Naive thymus-derived CD4-positive, alpha-beta T cell (primary cell): ENCODE measurements at regions of chr6 and their contacts with region 1.

Region 1: GRCh38 chr6:24974182-24975171 is 38.7 kb upstream of the RIPOR2 start:
- DNase-seq: peak in 1 of 9 donors; percentile 40
- ATAC-seq: peak; percentile 73
- H3K4me3 ChIP-seq: peak overlapping the region; percentile 6
- H3K4me3 Mint-ChIP-seq: peak overlapping the region in 3 of 10 donors; percentile 2 to 58 (median 20)
- H3K27ac ChIP-seq: no peak overlapping the region
- H3K27ac Mint-ChIP-seq: peak overlapping the region in 7 of 9 donors; percentile 1 to 90 (median 27)
- H3K4me1 ChIP-seq: peaks cover 19 to 31% of the 10 kb centered on the region in 2 donors
- H3K4me1 Mint-ChIP-seq: peaks cover 41 to 80% (median 72%) of the 10 kb centered on the region in 7 donors
- H3K27me3 ChIP-seq: no peaks in the 10 kb centered on the region
- H3K27me3 Mint-ChIP-seq: no peaks in the 10 kb centered on the region

Region 2: DNA sequence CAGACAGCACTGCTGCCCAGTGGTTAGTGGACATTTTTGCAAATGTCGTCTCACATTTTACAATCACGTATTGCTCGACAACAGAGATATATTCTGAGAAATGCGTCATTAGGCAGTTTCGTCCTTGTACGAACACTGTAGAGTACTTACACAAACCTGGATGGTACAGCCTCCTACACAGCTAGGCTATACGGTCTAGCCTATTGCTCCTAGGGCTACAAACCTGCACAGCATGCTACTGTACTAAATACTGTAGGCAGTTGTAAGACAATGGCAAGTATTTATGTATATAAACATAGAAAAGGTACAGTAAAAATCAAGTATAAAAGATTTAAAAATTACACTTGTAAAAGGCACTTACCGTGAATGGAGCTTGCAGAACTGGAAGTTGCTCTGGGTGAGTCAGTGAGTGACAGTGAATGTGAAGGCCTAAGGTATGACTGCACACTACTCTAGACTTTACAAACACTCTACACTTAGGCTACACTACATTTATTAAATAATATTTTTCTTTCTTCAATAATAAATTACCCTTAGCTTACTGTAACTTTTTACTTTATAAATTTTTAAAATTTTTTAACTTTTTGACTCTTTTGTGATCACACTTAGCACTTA is 436.6 kb before region 1 on chr6:
- CTCF ChIA-PET with region 1: no interaction called
- POLR2A ChIA-PET with region 1: no interaction called
- intact Hi-C with region 1: no loop called
- DNase-seq: no peak
- ATAC-seq: no peak
- H3K4me3 ChIP-seq: no peak overlapping the region
- H3K4me3 Mint-ChIP-seq: no peak overlapping the region
- H3K27ac ChIP-seq: no peak overlapping the region
- H3K27ac Mint-ChIP-seq: no peak overlapping the region
- H3K4me1 ChIP-seq: no peaks in the 10 kb centered on the region
- H3K4me1 Mint-ChIP-seq: no peaks in the 10 kb centered on the region
- H3K27me3 ChIP-seq: no peaks in the 10 kb centered on the region
- H3K27me3 Mint-ChIP-seq: no peaks in the 10 kb centered on the region

Region 3: DNA sequence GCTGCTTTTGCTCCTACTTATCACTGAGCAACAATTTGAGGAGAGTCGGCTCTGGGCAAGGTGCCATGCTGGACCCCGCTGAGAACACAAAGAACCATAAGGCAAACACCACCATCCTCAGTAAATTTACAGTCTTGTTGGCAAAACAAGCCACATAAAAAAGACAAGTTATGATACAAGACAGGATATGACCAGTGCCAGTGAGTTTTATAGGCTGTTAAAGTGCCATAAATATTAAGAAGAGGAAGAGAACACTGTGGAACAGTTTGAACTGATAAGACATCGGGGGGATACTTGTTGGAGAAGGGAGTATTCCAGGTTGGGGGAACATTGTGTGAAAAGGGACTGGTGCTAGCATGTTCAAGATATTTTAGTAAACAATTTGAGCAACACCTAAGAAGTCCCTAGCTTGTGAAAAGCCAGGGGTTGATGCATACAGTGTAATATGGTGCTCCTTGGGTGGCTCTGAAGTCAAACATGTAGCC is 13.4 kb before region 1 on chr6:
- CTCF ChIA-PET with region 1: interaction called, 6 read pairs
- POLR2A ChIA-PET with region 1: interaction called, 1,138 read pairs
- intact Hi-C with region 1: loop called (anchors 1 to 2 kb)
- DNase-seq: peak in 6 of 9 donors; percentile 46 to 70 (median 60)
- ATAC-seq: peak; percentile 80
- H3K4me3 ChIP-seq: peak overlapping the region; percentile 14
- H3K4me3 Mint-ChIP-seq: peak overlapping the region; percentile 46 to 81 (median 72)
- H3K27ac ChIP-seq: peak overlapping the region; percentile 64
- H3K27ac Mint-ChIP-seq: peak overlapping the region; percentile 44 to 97 (median 93)
- H3K4me1 ChIP-seq: peaks cover 70 to 74% of the 10 kb centered on the region in 2 donors
- H3K4me1 Mint-ChIP-seq: peaks cover 59 to 100% (median 90%) of the 10 kb centered on the region in 7 donors
- H3K27me3 ChIP-seq: no peaks in the 10 kb centered on the region
- H3K27me3 Mint-ChIP-seq: no peaks in the 10 kb centered on the region

Region 4: DNA sequence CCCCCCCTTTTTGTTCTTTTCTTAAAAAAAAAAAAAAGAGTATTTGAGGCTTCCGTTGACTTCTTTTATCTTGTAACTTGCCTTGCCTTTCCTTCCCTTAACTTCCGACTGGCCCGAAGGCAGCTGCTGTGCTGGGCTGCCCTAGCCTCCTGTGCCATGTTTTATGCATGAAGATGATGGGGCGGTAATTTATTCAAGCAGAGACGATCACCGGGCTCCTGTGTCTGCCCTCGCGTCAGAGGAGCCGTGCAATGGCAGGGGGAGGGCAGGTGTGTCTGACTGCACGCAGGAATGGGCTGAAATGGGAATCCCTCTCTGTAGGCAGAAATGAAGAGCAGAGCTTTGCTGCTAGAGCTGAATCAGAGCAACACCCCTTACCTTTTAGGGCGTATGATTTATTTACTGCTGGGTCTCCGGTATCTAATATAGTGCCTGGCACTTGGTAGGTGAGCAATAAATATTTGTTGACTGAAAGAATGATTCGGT is 67.6 kb after region 1 on chr6:
- CTCF ChIA-PET with region 1: no interaction called
- POLR2A ChIA-PET with region 1: no interaction called
- intact Hi-C with region 1: no loop called
- DNase-seq: peak in 7 of 9 donors; percentile 45 to 67 (median 49)
- ATAC-seq: peak; percentile 73
- H3K4me3 ChIP-seq: peak overlapping the region; percentile 60
- H3K4me3 Mint-ChIP-seq: peak overlapping the region; percentile 88 to 97 (median 92)
- H3K27ac ChIP-seq: peak overlapping the region; percentile 64
- H3K27ac Mint-ChIP-seq: peak overlapping the region; percentile 71 to 98 (median 90)
- H3K4me1 ChIP-seq: peaks cover 35 to 51% of the 10 kb centered on the region in 2 donors
- H3K4me1 Mint-ChIP-seq: peaks cover 38 to 62% (median 56%) of the 10 kb centered on the region in 7 donors
- H3K27me3 ChIP-seq: no peaks in the 10 kb centered on the region
- H3K27me3 Mint-ChIP-seq: peaks cover 0 to 3% (median 0%) of the 10 kb centered on the region in 5 donors